ENCODE measurements at regions of chr1 and their contacts with region 1.

Region 1: GRCh38 chr1:117674521-117675397 is 68.9 kb downstream of the TENT5C start:
- DNase-seq: peak in 8 of 9 experiments; percentile 34 to 83 (median 67)
- ATAC-seq: peak; percentile 86
- H3K4me3 ChIP-seq: no peak overlapping the region
- H3K4me3 Mint-ChIP-seq: no peak overlapping the region
- H3K27ac ChIP-seq: no peak overlapping the region
- H3K27ac Mint-ChIP-seq: no peak overlapping the region
- H3K4me1 ChIP-seq: no peaks in the 10 kb centered on the region
- H3K4me1 Mint-ChIP-seq: peaks cover 6% of the 10 kb centered on the region
- H3K27me3 ChIP-seq: no peaks in the 10 kb centered on the region
- H3K27me3 Mint-ChIP-seq: peaks cover 14% of the 10 kb centered on the region
- CTCF ChIP-seq: peak; percentile 58

Region 2: DNA sequence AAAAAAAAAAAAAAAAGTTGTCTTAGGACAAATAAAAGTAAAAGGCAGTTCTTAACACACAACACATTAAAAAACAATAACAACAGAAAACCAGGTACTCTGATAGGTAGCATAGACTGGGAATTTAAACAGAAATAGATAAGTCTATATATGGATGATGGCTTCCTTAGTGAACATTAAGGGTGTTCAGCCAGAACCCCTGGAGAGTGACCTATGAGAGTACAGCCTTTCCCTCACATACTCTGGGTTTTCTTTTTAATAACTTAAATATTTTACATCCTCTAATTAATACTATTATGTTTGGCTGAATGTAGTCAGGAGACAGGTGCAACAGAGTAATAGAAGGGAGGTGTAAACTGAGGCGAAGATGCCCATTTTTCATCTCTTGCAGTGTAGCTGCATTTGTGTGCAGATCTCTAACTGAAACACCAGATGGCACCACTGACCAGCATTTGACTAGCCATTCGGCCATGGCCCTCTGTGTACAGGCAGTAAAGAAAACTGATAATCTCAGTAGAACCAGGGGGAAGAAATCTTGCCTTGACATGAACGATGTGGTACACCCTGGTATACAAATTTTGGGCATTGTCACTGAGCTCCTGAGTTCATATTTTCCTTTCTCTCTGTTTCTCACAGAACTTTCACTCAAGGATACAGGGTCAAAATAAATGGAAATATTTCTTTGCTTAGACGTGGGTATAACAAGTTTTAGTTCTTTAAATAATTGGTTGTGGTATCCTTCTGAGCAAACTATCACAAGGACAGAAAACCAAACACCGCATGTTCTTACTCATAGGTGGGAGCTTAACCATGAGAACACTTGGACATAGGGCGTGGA is 607.0 kb before region 1 on chr1:
- CTCF ChIA-PET with region 1: no interaction called
- POLR2A ChIA-PET with region 1: no interaction called
- intact Hi-C with region 1: loop called (anchors 2 to 10 kb)
- DNase-seq: peak in 6 of 9 experiments; percentile 23 to 53 (median 39)
- ATAC-seq: peak; percentile 75
- H3K4me3 ChIP-seq: no peak overlapping the region
- H3K4me3 Mint-ChIP-seq: no peak overlapping the region
- H3K27ac ChIP-seq: no peak overlapping the region
- H3K27ac Mint-ChIP-seq: no peak overlapping the region
- H3K4me1 ChIP-seq: no peaks in the 10 kb centered on the region
- H3K4me1 Mint-ChIP-seq: peaks cover 19% of the 10 kb centered on the region
- H3K27me3 ChIP-seq: no peaks in the 10 kb centered on the region
- H3K27me3 Mint-ChIP-seq: no peaks in the 10 kb centered on the region
- CTCF ChIP-seq: peak; percentile 55

Region 3: DNA sequence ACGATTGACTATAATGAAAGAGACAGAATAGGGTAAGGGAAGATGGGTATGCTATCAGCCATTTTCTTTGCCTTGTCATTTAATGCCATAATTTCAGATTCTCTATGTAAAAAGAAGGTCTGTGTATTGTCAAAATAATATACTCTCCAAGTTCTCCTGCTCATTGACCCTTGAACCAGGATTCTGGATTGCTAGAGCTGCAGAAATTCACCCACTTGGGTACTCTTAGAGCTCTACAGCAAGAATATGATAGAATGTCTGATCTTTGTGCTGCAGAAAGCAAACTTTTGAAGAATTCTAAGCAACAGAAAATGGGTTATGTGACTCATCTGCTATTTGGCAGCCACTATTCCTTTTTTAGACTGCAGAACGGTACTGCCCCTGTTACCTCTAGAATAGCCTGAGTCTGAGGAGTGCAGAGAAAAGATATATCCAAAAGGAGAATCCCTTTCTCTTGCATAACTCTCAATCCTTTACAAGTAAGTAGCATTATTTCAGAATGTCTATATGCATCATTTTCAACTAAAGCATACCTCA is 147.1 kb before region 1 on chr1:
- CTCF ChIA-PET with region 1: interaction called, 263 read pairs
- POLR2A ChIA-PET with region 1: no interaction called
- intact Hi-C with region 1: no loop called
- DNase-seq: no peak
- ATAC-seq: no peak
- H3K4me3 ChIP-seq: no peak overlapping the region
- H3K4me3 Mint-ChIP-seq: no peak overlapping the region
- H3K27ac ChIP-seq: no peak overlapping the region
- H3K27ac Mint-ChIP-seq: no peak overlapping the region
- H3K4me1 ChIP-seq: no peaks in the 10 kb centered on the region
- H3K4me1 Mint-ChIP-seq: no peaks in the 10 kb centered on the region
- H3K27me3 ChIP-seq: no peaks in the 10 kb centered on the region
- H3K27me3 Mint-ChIP-seq: no peaks in the 10 kb centered on the region
- CTCF ChIP-seq: no peak

Region 4: GRCh38 chr1:117654493-117655219 is 20.1 kb before region 1 on chr1:
- CTCF ChIA-PET with region 1: interaction called, 19 read pairs
- POLR2A ChIA-PET with region 1: interaction called, 6 read pairs
- intact Hi-C with region 1: loop called (anchors 1 to 2 kb)
- DNase-seq: peak in 2 of 9 experiments; percentile 40 to 64
- ATAC-seq: peak; percentile 7
- H3K4me3 ChIP-seq: no peak overlapping the region
- H3K4me3 Mint-ChIP-seq: peak overlapping the region; percentile 40
- H3K27ac ChIP-seq: peak overlapping the region in 1 of 2 experiments; percentile 70
- H3K27ac Mint-ChIP-seq: peak overlapping the region; percentile 94
- H3K4me1 ChIP-seq: peaks cover 69% of the 10 kb centered on the region
- H3K4me1 Mint-ChIP-seq: peaks cover 83% of the 10 kb centered on the region
- H3K27me3 ChIP-seq: peaks cover 2 to 10% of the 10 kb centered on the region in 2 experiments
- H3K27me3 Mint-ChIP-seq: peaks cover 30% of the 10 kb centered on the region
- CTCF ChIP-seq: no peak

Region 5: DNA sequence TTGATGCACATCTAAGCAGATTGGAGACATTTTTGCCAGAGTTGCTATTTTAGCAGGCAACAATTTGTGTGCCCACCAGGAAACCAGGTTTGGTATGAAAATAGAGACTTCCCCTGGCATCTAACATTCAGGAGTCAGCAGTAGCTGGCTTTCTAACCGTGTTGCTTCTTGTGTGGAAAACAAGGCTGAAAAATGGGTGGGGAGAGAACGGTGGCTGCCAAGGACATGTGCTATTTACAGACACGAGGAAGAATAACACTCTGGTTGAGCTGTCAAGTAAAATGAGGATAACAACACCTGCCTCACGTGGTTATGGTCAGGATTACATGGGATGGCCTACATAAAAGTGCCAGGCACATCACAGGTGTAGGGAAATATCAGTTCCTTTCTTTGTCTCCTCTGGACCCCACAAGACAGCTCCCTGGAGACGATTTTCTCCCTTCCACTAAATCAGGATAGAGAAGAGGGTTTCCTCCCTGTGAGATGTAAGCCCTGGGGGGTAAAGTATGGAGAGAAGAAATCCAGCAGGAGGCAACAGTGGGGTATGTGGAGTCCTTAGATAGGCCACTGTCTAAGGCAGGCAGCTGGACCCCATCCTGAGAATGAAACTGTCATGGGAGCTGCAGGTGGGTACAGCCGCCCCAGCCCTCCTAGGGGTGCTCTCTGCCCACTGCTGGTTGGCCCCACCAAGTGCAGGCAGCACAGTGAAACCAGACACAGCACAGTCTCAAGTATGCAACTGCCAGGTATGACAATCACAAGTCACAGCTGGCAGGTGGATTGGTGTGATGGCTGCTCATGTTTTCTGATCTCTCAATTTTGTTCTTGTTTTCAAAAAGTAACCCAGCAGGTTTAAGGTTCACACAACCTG is 11.4 kb after region 1 on chr1:
- CTCF ChIA-PET with region 1: interaction called, 13 read pairs
- POLR2A ChIA-PET with region 1: no interaction called
- intact Hi-C with region 1: no loop called
- DNase-seq: peak in 2 of 9 experiments; percentile 23 to 33
- ATAC-seq: peak; percentile 58
- H3K4me3 ChIP-seq: no peak overlapping the region
- H3K4me3 Mint-ChIP-seq: no peak overlapping the region
- H3K27ac ChIP-seq: no peak overlapping the region
- H3K27ac Mint-ChIP-seq: no peak overlapping the region
- H3K4me1 ChIP-seq: no peaks in the 10 kb centered on the region
- H3K4me1 Mint-ChIP-seq: no peaks in the 10 kb centered on the region
- H3K27me3 ChIP-seq: no peaks in the 10 kb centered on the region
- H3K27me3 Mint-ChIP-seq: peaks cover 9% of the 10 kb centered on the region
- CTCF ChIP-seq: no peak

Measured in CD8-positive, alpha-beta T cell (primary cell).